ENCODE measurements at regions of chr4 and their contacts with region 1.

Region 1: DNA sequence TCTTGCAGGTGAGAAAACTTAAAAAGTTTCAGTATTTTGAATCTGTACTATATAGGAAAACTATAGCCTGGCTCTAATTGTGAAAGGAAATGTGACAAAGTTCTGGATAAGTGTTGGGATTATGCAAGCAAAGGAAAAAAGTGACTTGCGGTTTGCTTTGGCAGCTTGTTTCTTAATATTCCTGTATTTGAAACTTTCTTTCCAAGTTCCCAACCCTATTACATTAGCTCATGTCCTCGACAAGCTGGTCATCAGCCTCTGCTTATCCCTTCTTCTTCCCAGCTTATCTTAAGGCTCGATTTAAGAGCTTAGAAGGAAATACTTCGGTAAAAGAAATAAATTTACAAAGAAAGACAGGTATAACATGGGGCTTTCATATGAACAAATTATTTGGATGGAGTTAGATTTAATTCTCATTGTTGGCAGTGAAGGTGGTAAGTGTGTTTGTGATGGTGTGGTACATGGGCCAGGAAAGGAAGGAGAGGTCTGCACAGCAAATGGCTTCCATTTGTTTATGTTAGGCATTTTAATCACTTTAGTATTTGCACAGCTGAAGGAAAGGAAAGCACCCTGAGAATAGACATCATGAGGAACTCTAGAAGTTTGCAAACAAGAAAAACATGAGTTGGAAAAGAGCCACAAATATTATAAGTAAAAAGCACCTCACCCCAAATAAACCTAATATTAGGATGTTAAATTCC is 5.1 kb upstream of the MYOZ2 start:
- DNase-seq: no peak

Region 2: DNA sequence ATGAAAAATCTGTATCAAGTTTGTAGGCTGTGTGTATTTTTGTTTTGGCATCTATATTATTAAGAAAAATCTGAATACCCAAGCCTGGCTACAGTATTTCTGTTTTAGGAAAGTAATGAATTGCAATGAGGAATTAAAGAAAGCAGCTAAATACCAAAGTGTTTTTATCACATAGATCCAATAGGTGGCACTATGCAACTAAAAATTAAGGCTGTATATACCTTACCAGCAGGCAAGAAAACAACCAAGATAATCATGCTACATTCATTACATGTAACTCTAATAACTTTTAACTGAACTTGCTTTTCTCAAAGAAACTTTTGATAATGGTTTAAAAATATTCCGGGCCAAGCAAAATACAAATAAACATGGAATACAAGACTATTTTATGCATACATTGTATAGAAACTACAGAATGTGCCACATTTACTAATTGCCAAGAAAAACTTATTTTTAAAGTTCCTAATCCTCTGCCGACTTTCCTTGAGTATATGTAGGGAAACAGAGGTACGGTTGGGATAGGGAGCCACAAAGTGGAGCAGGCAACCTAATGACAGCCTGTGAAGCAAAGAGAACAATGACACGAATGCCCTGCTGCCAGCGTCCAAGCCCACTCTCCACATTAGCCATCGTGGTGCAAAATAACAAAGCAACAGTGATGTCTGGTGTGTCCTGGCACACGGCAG is 358.3 kb before region 1 on chr4:
- intact Hi-C with region 1: no loop called
- DNase-seq: no peak

Region 3: GRCh38 chr4:119103263-119103662 is 27.3 kb before region 1 on chr4:
- intact Hi-C with region 1: loop called (anchors 5 kb)
- DNase-seq: no peak

Region 4: DNA sequence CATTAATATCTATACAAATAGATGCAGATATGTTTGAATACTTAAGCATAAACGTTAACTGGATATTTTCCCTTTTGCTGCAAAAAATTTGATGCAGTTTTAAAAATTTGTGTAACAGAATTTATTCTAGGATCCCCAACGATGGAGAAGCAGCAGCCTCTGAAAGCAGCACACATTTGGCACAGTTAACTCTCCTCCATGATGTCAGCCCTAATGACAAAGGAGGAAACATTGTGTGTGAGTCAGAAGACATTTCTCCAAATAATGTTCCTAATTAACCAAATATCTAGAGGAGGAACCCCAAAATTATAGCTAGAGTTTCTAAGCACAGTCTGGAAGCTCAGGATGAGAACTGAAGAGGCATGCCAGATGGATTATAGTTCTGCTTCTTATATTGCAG is 1218.0 kb after region 1 on chr4:
- intact Hi-C with region 1: no loop called
- DNase-seq: no peak